Keratinocyte (primary cell): ENCODE measurements at regions of chr19 and their contacts with region 1.

Region 1: DNA sequence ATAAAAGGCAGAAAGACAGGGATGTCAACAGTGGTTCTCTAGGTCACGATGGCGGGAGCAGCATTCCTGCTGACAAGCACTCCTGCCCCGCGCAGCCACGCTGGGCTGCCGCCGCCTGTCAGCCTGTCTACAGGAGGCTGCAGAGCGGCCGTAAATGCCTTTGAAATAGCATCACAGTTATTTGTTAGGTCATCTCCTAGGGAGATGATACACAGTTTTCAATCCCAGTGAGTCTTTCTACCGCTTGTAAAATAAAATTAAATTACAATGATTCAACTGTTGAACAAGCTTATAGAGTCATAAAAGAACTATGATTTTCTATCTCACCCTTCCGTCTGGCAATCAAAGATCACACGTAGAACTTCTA is 7.3 kb upstream of the SLC7A9 start:
- DNase-seq: no peak
- H3K4me3 ChIP-seq: no peak overlapping the region
- H3K27ac ChIP-seq: no peak overlapping the region
- H3K4me1 ChIP-seq: no peaks in the 10 kb centered on the region
- H3K27me3 ChIP-seq: no peaks in the 10 kb centered on the region
- CTCF ChIP-seq: no peak

Region 2: DNA sequence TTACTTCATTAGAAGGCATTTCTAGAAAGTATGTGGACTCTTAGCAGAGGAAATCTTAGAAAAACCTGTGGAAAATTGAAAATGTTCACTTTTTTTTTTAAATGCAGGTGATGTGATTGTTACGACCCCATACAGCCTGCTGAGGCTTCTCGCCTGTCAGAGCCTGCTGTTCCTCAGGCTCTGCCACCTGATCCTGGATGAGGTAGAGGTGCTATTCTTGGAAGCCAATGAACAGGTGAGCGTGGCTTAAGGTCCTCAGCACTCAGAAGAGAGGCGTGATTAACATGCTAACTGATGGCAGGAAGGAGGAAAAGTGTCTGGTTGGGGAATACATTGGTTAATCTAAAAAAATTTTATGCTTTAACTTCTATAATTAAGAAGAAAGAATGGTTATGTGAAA is 78.7 kb before region 1 on chr19:
- dilution Hi-C with region 1: loop called (anchors 25 kb)
- DNase-seq: no peak
- H3K4me3 ChIP-seq: no peak overlapping the region
- H3K27ac ChIP-seq: no peak overlapping the region
- H3K4me1 ChIP-seq: no peaks in the 10 kb centered on the region
- H3K27me3 ChIP-seq: no peaks in the 10 kb centered on the region
- CTCF ChIP-seq: no peak

Region 3: GRCh38 chr19:32945277-32945676 is 68.4 kb after region 1 on chr19:
- dilution Hi-C with region 1: no loop called
- DNase-seq: no peak
- H3K4me3 ChIP-seq: no peak overlapping the region
- H3K27ac ChIP-seq: no peak overlapping the region
- H3K4me1 ChIP-seq: no peaks in the 10 kb centered on the region
- H3K27me3 ChIP-seq: no peaks in the 10 kb centered on the region
- CTCF ChIP-seq: no peak

Region 4: DNA sequence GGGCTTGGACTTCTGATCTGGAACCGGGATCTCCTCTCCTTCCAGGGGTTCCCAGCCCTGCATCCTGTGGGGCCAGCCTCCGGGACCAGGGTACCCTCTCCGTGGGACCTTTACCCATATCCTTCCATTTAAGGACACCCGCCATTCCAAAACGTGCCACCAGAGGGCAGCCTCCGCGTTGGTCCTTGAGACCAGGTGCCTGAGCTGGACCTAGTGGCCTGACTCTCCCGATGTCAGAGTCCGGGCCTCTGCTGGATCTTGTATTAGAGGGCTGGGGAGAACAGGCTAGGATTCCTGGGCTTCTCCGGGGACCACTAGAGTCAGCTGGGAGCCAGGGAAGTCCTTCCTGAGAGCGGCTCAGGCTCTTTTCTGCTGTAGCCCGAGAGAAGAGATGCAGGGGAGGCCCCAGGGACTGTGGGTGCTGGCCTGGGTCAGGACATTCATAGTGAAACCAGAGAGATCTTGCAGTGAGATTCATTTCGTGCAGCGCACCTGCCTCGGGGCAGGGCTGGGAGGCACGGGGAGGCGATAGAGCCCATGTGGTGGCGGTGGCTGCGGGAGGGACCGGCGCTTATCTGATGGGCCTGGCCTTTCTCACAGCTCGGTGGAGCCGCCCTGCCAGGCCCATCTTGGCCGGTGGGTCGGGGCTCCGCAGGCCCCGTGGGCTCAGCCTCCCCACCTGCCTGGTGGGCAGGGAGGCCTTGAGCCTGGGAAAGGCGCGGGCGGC is 358.5 kb after region 1 on chr19:
- dilution Hi-C with region 1: no loop called
- DNase-seq: peak; percentile 11
- H3K4me3 ChIP-seq: no peak overlapping the region
- H3K27ac ChIP-seq: no peak overlapping the region
- H3K4me1 ChIP-seq: no peaks in the 10 kb centered on the region
- H3K27me3 ChIP-seq: peaks cover 4% of the 10 kb centered on the region
- CTCF ChIP-seq: peak; percentile 89 to 92 (median 90)